Ovary (tissue), 10 donors: ENCODE measurements at regions of chr12 and their contacts with region 1.

Region 1: GRCh38 chr12:108618079-108618952 is 15.4 kb downstream of the SELPLG start:
- DNase-seq: peak; percentile 79 to 89 (median 86)
- H3K4me3 ChIP-seq: no peak overlapping the region
- H3K27ac ChIP-seq: no peak overlapping the region
- H3K4me1 ChIP-seq: no peaks in the 10 kb centered on the region
- H3K27me3 ChIP-seq: no peaks in the 10 kb centered on the region
- CTCF ChIP-seq: peak; percentile 85 to 99 (median 88)
- EP300 ChIP-seq: no peak
- POLR2A ChIP-seq: no peak

Region 2: GRCh38 chr12:108562348-108563135 is 55.8 kb before region 1 on chr12 and contains the start of gene ISCU:
- intact Hi-C with region 1: loop called (anchors 2 to 5 kb)
- DNase-seq: peak; percentile 98 to 100 (median 99)
- H3K4me3 ChIP-seq: peak within 1 kb of the TSS; percentile 96
- H3K27ac ChIP-seq: peak within 1 kb of the TSS; percentile 78 to 88
- H3K4me1 ChIP-seq: peaks cover 12% of the 10 kb centered on the region
- H3K27me3 ChIP-seq: no peaks in the 10 kb centered on the region
- CTCF ChIP-seq: no peak
- EP300 ChIP-seq: no peak
- POLR2A ChIP-seq: peak; percentile 92
- total RNA-seq, gene ISCU: 110 to 238 (median 156) TPM

Region 3: DNA sequence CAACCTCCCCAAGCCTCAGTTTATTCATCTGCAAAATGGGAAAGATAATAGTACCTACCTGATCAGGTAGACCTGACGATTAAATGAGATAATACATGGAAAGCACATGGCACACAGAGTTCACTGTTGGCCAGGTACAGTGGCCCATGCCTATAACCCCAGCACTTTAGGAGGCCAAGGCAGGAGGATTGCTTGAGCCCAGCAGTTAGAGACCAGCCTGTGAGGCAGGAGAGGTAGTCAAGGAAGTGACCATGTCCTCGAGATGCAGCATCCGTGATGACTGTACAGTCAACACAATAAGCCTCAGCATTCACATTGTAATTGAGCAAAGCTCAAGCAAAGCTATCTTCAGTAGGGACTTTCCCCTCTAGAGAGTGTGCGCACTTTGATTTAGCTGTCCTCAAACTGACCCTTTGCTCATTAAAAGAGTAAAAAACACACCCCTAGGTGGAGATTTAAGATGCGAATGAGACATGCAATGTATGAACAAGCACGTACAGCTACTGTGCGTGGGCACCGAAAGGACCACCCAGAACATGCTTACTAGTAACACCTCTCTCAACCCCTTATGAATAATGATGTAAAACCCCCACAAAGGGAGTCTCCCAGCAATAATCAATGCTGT is 46.0 kb before region 1 on chr12:
- intact Hi-C with region 1: loop called in 2 of 4 experiments (anchors 2 to 5 kb)
- DNase-seq: no peak
- H3K4me3 ChIP-seq: no peak overlapping the region
- H3K27ac ChIP-seq: no peak overlapping the region
- H3K4me1 ChIP-seq: no peaks in the 10 kb centered on the region
- H3K27me3 ChIP-seq: no peaks in the 10 kb centered on the region
- CTCF ChIP-seq: no peak
- EP300 ChIP-seq: no peak
- POLR2A ChIP-seq: no peak

Region 4: DNA sequence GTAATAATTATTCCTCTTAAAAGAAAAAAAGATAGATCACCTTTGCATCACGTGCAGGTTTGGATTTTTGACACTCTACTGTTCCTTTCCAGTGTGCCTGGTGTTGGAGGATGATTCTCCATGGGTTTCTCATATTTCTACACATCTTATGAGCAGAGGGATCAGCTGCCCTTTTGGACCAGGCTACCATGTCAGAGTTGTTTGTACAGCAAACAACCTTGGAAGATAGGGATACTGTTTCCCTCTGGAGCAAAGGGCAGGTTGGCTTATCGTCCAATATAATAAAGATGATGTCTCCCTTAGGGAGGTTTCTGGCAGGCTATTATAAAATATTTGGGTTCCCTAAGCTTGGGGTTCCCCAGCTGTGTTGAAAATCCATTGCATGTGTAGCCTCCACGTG is 303.6 kb after region 1 on chr12:
- intact Hi-C with region 1: no loop called
- DNase-seq: no peak
- H3K4me3 ChIP-seq: no peak overlapping the region
- H3K27ac ChIP-seq: no peak overlapping the region
- H3K4me1 ChIP-seq: no peaks in the 10 kb centered on the region
- H3K27me3 ChIP-seq: no peaks in the 10 kb centered on the region
- CTCF ChIP-seq: no peak
- EP300 ChIP-seq: no peak
- POLR2A ChIP-seq: no peak